Mammary epithelial cell (primary cell): ENCODE measurements at regions of chr6 and their contacts with region 1.

Region 1: DNA sequence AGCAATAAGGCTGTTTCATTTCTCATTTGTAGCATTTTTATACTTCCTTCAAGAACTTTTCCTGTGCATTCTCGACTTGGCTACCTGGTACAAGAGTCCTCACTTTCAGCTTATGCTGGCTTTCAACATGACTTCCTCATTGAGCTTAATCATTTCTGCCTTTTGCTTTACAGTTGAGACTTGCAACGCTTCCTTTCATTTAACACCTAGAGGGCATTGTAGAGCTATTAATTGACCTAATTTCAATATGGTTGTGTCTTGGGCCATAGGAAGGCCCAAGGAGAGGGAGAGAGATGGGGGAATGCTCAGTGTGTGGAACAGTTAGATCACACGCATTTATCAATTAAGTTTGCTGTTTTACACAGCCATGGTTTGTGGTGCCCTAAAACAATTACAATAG is 37.2 kb downstream of the SLC22A2 start:
- DNase-seq: peak; percentile 41
- H3K4me3 ChIP-seq: no peak overlapping the region
- H3K27ac ChIP-seq: no peak overlapping the region
- H3K4me1 ChIP-seq: no peaks in the 10 kb centered on the region
- H3K27me3 ChIP-seq: no peaks in the 10 kb centered on the region
- CTCF ChIP-seq: peak; percentile 28 to 61

Region 2: DNA sequence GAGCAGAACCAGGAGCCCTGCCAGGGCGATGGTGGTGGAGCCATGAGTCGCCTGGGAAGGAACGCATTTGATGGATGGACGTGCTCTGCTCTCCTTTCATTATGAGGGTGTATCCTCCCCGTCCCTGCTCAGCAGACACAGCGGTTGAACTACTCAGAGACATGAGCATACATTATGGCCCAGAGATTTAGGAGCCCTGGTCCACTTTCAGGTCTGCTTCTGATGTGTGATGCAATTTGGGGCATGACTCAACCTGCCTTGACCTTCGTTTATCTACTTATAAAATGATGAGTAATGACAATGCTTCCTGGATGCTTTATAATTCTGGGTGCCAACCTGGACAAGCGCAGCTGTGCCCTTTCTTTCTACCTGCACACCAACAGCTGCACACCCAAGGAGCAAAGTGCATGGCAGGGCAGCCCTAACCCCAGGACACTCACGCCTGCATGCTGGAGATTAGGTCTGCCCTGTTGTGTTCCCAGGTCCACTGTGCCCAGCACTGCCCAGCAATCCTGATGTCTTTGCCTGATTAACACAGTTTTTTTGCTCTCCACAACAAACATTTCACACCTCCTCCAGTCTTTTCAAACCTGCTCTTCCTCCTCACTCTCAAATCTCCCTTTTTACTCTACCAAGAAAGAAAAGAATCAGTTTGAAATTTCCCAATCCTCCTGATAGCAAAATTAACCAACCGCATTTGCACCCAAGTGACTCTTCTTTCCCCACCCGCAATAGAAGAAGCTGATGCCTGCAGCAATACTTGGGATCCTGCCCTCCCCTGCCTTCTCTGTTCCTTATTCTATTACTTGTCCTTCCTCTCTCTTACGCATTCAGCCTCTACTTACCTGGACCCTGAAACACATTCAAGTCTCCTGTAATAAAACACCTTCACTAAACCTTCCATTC is 1483.5 kb before region 1 on chr6:
- CTCF ChIA-PET with region 1: no interaction called
- dilution Hi-C with region 1: no loop called
- in situ Hi-C with region 1: no loop called
- intact Hi-C with region 1: no loop called
- DNase-seq: peak; percentile 83
- H3K4me3 ChIP-seq: no peak overlapping the region
- H3K27ac ChIP-seq: peak overlapping the region; percentile 0
- H3K4me1 ChIP-seq: peaks cover 23% of the 10 kb centered on the region
- H3K27me3 ChIP-seq: no peaks in the 10 kb centered on the region
- CTCF ChIP-seq: no peak

Region 3: GRCh38 chr6:159862103-159862502 is 359.3 kb before region 1 on chr6:
- CTCF ChIA-PET with region 1: no interaction called
- dilution Hi-C with region 1: no loop called
- in situ Hi-C with region 1: no loop called
- intact Hi-C with region 1: loop called (anchors 2 kb)
- DNase-seq: no peak
- H3K4me3 ChIP-seq: no peak overlapping the region
- H3K27ac ChIP-seq: no peak overlapping the region
- H3K4me1 ChIP-seq: no peaks in the 10 kb centered on the region
- H3K27me3 ChIP-seq: no peaks in the 10 kb centered on the region
- CTCF ChIP-seq: no peak

Region 4: GRCh38 chr6:160121981-160122380 is 99.4 kb before region 1 on chr6:
- CTCF ChIA-PET with region 1: no interaction called
- dilution Hi-C with region 1: no loop called
- in situ Hi-C with region 1: no loop called
- intact Hi-C with region 1: no loop called
- DNase-seq: no peak
- H3K4me3 ChIP-seq: no peak overlapping the region
- H3K27ac ChIP-seq: no peak overlapping the region
- H3K4me1 ChIP-seq: no peaks in the 10 kb centered on the region
- H3K27me3 ChIP-seq: no peaks in the 10 kb centered on the region
- CTCF ChIP-seq: no peak

Region 5: GRCh38 chr6:160137989-160138835 is 83.2 kb before region 1 on chr6:
- CTCF ChIA-PET with region 1: no interaction called
- dilution Hi-C with region 1: no loop called
- in situ Hi-C with region 1: no loop called
- intact Hi-C with region 1: loop called (anchors 1 kb)
- DNase-seq: peak; percentile 46
- H3K4me3 ChIP-seq: no peak overlapping the region
- H3K27ac ChIP-seq: no peak overlapping the region
- H3K4me1 ChIP-seq: peaks cover 7% of the 10 kb centered on the region
- H3K27me3 ChIP-seq: no peaks in the 10 kb centered on the region
- CTCF ChIP-seq: peak; percentile 75 to 84

Region 6: GRCh38 chr6:160348142-160349019 is 127.0 kb after region 1 on chr6 and contains the start of gene SLC22A3:
- CTCF ChIA-PET with region 1: no interaction called
- dilution Hi-C with region 1: no loop called
- in situ Hi-C with region 1: no loop called
- intact Hi-C with region 1: loop called (anchors 2 kb)
- DNase-seq: peak; percentile 31
- H3K4me3 ChIP-seq: peak within 1 kb of the TSS; percentile 31 to 70 (median 55)
- H3K27ac ChIP-seq: no peak within 1 kb of the TSS
- H3K4me1 ChIP-seq: peaks cover 6% of the 10 kb centered on the region
- H3K27me3 ChIP-seq: no peaks in the 10 kb centered on the region
- CTCF ChIP-seq: peak in 1 of 2 donors; percentile 43
- total RNA-seq, gene SLC22A3: 0.33 to 1.4 TPM

Region 7: GRCh38 chr6:160439751-160440150 is 218.3 kb after region 1 on chr6:
- CTCF ChIA-PET with region 1: no interaction called
- dilution Hi-C with region 1: no loop called
- in situ Hi-C with region 1: loop called in 1 of 2 experiments (anchors 10 kb)
- intact Hi-C with region 1: no loop called
- DNase-seq: no peak
- H3K4me3 ChIP-seq: no peak overlapping the region
- H3K27ac ChIP-seq: no peak overlapping the region
- H3K4me1 ChIP-seq: no peaks in the 10 kb centered on the region
- H3K27me3 ChIP-seq: no peaks in the 10 kb centered on the region
- CTCF ChIP-seq: no peak

Region 8: DNA sequence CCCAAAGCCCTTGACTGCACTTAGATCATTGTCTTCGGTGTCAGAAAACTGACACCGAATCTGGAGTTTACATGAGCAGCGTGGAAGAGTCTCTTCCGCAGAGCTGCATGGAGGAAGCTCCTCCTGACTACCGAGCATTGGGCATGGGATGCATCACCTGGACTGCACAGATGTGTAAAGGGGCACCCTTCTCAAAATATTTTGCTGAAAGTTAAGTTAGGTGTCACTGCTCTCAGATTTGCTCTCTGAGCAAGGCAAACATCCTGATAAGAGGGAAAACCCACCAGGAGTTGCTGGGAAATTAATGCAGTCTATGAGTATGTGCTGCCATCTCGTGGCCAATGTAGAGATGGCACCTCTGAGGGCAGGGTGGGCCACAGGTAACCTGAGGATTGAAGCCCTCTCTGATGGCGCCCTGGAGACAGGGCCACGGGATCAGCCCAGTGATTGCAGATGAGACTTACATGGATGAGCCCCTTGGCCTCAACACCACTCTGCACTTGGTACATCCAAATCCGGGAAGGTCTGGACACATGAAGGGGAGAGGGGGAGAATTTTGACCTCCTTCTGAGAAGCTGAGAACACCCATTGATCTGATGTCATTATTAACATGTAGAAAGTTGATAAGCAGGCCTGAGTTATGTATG is 312.8 kb after region 1 on chr6:
- CTCF ChIA-PET with region 1: no interaction called
- dilution Hi-C with region 1: no loop called
- in situ Hi-C with region 1: no loop called
- intact Hi-C with region 1: loop called (anchors 1 kb)
- DNase-seq: peak; percentile 25
- H3K4me3 ChIP-seq: no peak overlapping the region
- H3K27ac ChIP-seq: no peak overlapping the region
- H3K4me1 ChIP-seq: no peaks in the 10 kb centered on the region
- H3K27me3 ChIP-seq: no peaks in the 10 kb centered on the region
- CTCF ChIP-seq: peak; percentile 92 to 93